Heart left ventricle (tissue), 16 donors: ENCODE measurements at regions of chr7 and their contacts with region 1.

Region 1: GRCh38 chr7:30173058-30173897 is 38.5 kb downstream of the MTURN start:
- DNase-seq: peak; percentile 75 to 91 (median 78)
- ATAC-seq: peak; percentile 89 to 91 (median 90)
- H3K4me3 ChIP-seq: no peak overlapping the region
- H3K27ac ChIP-seq: peak overlapping the region; percentile 69 to 89 (median 76)
- H3K4me1 ChIP-seq: peaks cover 0 to 97% (median 39%) of the 10 kb centered on the region in 12 donors
- H3K27me3 ChIP-seq: no peaks in the 10 kb centered on the region
- CTCF ChIP-seq: peak in 7 of 12 donors; percentile 13 to 52 (median 22)
- POLR2A ChIP-seq: no peak

Region 2: GRCh38 chr7:30240106-30240800 is 67.0 kb after region 1 on chr7:
- intact Hi-C with region 1: loop called in 1 of 10 experiments (anchors 10 kb)
- DNase-seq: no peak
- ATAC-seq: peak; percentile 60 to 83 (median 66)
- H3K4me3 ChIP-seq: no peak overlapping the region
- H3K27ac ChIP-seq: peak overlapping the region in 1 of 12 donors; percentile 41
- H3K4me1 ChIP-seq: peaks cover 0 to 31% (median 13%) of the 10 kb centered on the region in 12 donors
- H3K27me3 ChIP-seq: no peaks in the 10 kb centered on the region
- CTCF ChIP-seq: no peak
- POLR2A ChIP-seq: no peak

Region 3: DNA sequence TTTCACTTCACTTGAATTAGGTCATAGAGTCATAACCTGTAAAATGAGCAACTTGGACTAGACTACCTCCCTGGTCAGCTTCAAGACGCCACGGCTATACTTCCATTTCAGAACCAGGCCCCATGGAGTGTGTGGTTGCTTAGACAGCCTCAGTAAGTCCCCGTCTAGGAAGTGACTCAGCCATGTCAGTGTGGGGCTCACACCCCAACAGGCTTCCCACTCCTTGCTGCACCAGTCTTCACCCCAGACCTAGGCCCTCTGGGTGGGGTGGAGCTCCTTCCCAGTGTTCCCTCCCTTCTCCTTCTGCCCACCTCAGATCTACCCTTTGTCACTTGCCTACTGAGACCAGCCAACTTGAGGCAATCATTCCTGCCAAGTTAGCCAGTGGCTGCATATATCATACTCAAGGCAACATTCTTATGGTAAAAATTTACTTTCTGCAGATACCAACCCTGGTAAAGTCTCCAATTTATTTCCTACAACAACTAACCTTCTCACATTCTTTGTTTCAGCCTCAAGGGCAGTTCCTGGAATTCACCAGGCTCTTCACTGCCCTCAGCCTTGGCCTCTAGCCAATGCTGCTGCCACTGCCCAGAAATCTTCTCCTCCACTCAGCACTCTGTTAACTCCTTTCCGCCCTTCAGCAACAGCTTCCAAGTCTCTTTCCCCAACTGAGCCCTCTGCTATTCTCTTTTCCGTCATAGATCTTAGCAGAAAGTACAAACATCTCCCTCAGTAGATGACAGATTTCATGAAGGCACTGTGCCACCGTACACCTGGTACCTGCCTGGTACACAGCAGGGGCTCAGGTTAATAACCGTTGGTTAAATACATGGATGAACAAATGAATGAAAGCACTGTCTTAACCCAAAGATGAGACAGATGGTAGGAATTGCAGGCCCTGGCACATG is 79.9 kb after region 1 on chr7:
- intact Hi-C with region 1: loop called in 3 of 10 experiments (anchors 10 kb)
- DNase-seq: peak; percentile 68 to 82 (median 74)
- ATAC-seq: peak; percentile 88 to 96 (median 92)
- H3K4me3 ChIP-seq: no peak overlapping the region
- H3K27ac ChIP-seq: peak overlapping the region in 7 of 12 donors; percentile 54 to 82 (median 74)
- H3K4me1 ChIP-seq: peaks cover 0 to 60% (median 20%) of the 10 kb centered on the region in 12 donors
- H3K27me3 ChIP-seq: no peaks in the 10 kb centered on the region
- CTCF ChIP-seq: no peak
- POLR2A ChIP-seq: no peak

Region 4: DNA sequence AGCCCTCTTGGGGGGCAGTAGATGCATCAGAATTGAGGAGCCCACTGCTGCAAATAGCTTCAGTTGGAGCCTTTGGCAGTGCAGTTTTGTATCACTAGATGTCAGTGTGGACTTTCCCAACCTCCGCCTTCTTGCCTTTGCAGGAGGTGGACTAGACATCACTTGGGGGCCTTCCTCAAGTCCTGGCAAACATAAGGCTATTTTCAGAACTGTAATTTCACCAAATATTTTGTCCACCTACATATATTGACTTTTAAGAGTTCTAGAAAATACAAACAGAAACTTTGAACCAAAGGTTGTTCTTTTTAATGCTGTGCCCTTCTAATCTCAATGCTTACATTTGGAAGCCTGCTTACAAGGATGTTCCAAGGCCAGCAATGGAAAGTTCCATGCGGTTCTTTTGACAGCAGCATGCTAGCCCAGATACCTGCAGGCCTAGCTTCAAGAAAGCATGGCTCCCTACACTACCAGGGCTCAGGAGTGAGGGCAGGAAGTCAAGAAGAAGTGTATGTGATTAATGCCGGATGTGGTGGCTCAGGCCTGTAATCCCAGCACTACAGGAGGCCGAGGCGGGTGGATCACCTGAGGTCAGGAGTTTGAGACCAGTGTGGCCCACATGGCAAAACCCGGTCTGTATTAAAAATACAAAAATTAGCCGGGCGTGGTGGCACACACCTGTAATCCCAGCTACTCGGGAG is 103.1 kb after region 1 on chr7:
- intact Hi-C with region 1: loop called in 3 of 10 experiments (anchors 5 to 10 kb)
- DNase-seq: peak in 2 of 5 donors; percentile 30 to 34
- ATAC-seq: peak in 3 of 4 donors; percentile 60 to 86 (median 79)
- H3K4me3 ChIP-seq: no peak overlapping the region
- H3K27ac ChIP-seq: no peak overlapping the region
- H3K4me1 ChIP-seq: peaks cover 0 to 19% (median 0%) of the 10 kb centered on the region in 12 donors
- H3K27me3 ChIP-seq: no peaks in the 10 kb centered on the region
- CTCF ChIP-seq: peak; percentile 35 to 78 (median 64)
- POLR2A ChIP-seq: no peak

Region 5: DNA sequence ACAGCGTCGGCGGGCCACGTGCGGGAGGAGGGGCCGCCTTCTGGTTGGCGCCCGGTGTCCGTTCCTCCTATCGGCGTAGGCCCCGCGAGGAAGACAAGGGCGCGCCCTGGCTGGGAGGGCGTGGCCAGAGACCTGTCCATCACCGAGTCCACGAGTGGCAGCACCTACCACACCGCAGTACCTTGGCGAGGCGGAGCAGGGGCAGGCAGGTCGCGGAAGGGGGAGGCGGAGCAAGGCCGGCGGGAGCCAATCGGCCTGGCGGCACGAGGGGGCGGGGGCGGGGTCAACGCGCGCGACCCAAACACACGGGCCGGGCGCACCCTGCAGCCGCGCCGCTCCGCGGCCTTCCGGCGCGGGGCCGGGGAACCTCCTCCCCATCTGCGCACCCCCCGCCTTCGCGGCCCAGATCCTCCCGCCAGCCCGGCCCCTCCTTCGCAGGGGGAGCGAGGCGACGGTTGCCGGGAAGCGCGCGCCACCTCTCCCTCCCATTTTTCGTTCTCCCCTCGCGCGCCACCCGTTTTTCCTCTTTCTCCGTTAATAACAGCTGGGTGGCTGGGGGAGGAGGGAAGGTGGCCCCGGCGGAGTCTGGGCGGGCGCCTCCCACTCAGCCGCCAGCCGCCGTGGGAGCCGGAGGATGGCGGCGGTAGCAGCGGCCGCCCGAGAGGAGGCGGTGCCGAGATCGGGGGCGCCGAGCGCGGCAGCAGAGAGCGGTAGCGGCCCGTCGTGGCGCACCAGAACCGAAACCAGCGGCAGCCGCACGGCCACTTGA is 111.2 kb after region 1 on chr7 and contains the start of gene ZNRF2:
- intact Hi-C with region 1: loop called in 3 of 10 experiments (anchors 5 to 10 kb)
- DNase-seq: peak; percentile 98 to 100 (median 99)
- ATAC-seq: peak; percentile 96 to 99 (median 98)
- H3K4me3 ChIP-seq: peak within 1 kb of the TSS; percentile 54 to 98 (median 85)
- H3K27ac ChIP-seq: peak within 1 kb of the TSS; percentile 95 to 99 (median 98)
- H3K4me1 ChIP-seq: peaks cover 0 to 44% (median 23%) of the 10 kb centered on the region in 12 donors
- H3K27me3 ChIP-seq: no peaks in the 10 kb centered on the region
- CTCF ChIP-seq: peak; percentile 19 to 80 (median 54)
- POLR2A ChIP-seq: peak in 1 of 2 donors; percentile 79
- total RNA-seq, gene ZNRF2: 7.3 to 15.2 (median 10.9) TPM

Region 6: GRCh38 chr7:30478349-30479201 is 305.3 kb after region 1 on chr7 and contains the start of gene NOD1:
- intact Hi-C with region 1: loop called in 1 of 10 experiments (anchors 5 kb)
- DNase-seq: peak; percentile 87 to 91 (median 89)
- ATAC-seq: peak; percentile 74 to 95 (median 94)
- H3K4me3 ChIP-seq: peak within 1 kb of the TSS; percentile 47 to 90 (median 68)
- H3K27ac ChIP-seq: peak within 1 kb of the TSS; percentile 91 to 99 (median 95)
- H3K4me1 ChIP-seq: peaks cover 3 to 54% (median 48%) of the 10 kb centered on the region in 12 donors
- H3K27me3 ChIP-seq: no peaks in the 10 kb centered on the region
- CTCF ChIP-seq: peak in 4 of 12 donors; percentile 24 to 47 (median 32)
- POLR2A ChIP-seq: peak in 1 of 2 donors; percentile 73
- total RNA-seq, gene NOD1: 5.3 to 28.8 (median 9.0) TPM

Region 7: GRCh38 chr7:30564243-30564892 is 391.1 kb after region 1 on chr7:
- intact Hi-C with region 1: loop called in 5 of 10 experiments (anchors 5 to 10 kb)
- DNase-seq: peak; percentile 76 to 83 (median 79)
- ATAC-seq: peak; percentile 81 to 94 (median 94)
- H3K4me3 ChIP-seq: no peak overlapping the region
- H3K27ac ChIP-seq: no peak overlapping the region
- H3K4me1 ChIP-seq: peaks cover 0 to 23% (median 1%) of the 10 kb centered on the region in 12 donors
- H3K27me3 ChIP-seq: no peaks in the 10 kb centered on the region
- CTCF ChIP-seq: peak; percentile 74 to 90 (median 86)
- POLR2A ChIP-seq: no peak

Region 8: GRCh38 chr7:31082447-31082846 is 909.2 kb after region 1 on chr7:
- intact Hi-C with region 1: no loop called
- DNase-seq: peak in 3 of 5 donors; percentile 7 to 31 (median 20)
- ATAC-seq: peak in 2 of 4 donors; percentile 29 to 56
- H3K4me3 ChIP-seq: no peak overlapping the region
- H3K27ac ChIP-seq: peak overlapping the region in 9 of 12 donors; percentile 12 to 47 (median 17)
- H3K4me1 ChIP-seq: peaks cover 0 to 20% (median 9%) of the 10 kb centered on the region in 12 donors
- H3K27me3 ChIP-seq: peaks cover 0 to 4% (median 0%) of the 10 kb centered on the region in 9 donors
- CTCF ChIP-seq: no peak
- POLR2A ChIP-seq: no peak